ENCODE measurements at regions of chr16 and their contacts with region 1.

Region 1: GRCh38 chr16:13919683-13920509 is at the start of gene ERCC4:
- DNase-seq: peak; percentile 100
- total RNA-seq, gene ERCC4: 11.1 to 16.5 TPM

Region 2: DNA sequence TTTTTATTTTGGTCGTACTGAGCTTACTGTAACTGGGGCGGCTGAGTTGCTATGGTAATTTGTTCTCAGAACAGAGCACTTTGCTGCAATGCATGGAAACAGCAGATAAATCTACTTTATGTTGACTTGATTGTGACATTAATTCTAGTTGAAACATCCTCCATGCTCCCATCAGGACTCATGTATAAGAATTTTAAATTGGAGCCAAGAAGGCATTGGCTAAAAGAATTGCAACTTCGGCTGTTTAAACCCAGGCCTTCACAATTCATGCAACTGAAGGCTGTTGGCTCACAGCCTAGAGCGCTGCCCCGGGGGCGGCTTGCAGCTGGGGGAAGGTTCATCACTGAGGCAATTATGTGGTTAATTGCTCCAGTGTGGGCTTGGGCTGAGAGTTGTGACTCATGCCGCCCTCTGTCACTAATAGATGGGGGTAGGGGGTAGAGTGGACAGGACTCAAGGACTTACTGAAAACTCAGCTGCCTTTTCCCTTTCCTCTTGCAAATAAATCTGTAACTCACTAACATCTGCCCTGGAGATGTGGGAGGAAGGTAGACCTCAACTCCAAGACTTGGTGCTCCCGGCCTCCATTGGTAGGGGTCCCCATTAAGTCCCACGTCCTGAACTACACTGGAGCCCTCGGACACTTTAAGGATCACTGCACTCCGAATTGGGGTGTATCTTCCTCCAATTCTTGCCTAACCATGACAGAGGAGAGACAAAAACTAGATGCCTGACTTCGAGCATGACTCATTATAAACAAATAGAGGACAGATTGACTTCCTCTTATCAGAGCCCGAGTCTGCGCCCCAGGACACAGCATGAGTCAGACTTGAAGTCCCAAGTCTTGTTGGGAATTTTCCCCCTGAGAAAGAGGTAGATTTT is 37.5 kb after region 1 on chr16:
- intact Hi-C with region 1: no loop called
- DNase-seq: peak; percentile 89

Region 3: DNA sequence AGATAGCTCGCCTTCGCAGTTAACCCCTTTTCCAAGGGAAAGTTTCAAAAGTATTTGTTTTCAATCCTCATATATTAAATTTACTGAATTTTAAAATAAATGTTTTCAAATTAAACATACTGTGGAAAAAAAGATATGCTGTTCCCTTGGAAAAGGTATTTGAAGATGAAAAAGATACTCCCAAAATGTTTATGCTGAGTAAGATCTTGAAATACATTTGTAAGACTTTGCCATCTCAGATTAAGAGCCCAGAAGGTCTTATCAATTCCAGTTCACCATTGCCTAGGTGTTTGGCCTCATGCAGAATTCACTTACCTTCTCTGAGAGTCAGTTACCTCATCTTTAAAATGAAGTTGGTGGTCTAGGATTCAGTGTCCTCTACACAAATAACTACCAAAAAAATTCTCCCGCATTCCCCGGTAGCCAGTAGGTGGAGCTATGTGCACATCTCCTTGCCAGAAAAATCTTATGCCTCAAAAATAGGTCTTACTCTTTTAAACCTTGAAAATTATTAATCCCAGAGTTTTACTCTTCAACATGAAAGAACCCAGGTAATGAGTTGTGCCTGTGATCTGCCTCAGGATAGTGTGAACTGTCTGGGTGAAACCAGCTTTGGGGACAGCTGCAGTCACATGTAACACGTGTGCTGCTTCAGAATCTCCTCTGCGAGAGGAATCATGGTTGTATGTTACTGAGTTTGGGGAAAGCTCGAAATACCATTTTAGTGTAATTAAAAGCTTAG is 329.6 kb after region 1 on chr16:
- intact Hi-C with region 1: loop called in 1 of 2 experiments (anchors 10 kb)
- DNase-seq: no peak

Region 4: GRCh38 chr16:14600164-14600563 is 680.3 kb after region 1 on chr16:
- intact Hi-C with region 1: loop called in 1 of 2 experiments (anchors 10 kb)
- DNase-seq: no peak

Measured in posterior vena cava (tissue), 2 donors.